Endothelial cell of umbilical vein (primary cell): ENCODE measurements at regions of chr2 and their contacts with region 1.

Region 1: DNA sequence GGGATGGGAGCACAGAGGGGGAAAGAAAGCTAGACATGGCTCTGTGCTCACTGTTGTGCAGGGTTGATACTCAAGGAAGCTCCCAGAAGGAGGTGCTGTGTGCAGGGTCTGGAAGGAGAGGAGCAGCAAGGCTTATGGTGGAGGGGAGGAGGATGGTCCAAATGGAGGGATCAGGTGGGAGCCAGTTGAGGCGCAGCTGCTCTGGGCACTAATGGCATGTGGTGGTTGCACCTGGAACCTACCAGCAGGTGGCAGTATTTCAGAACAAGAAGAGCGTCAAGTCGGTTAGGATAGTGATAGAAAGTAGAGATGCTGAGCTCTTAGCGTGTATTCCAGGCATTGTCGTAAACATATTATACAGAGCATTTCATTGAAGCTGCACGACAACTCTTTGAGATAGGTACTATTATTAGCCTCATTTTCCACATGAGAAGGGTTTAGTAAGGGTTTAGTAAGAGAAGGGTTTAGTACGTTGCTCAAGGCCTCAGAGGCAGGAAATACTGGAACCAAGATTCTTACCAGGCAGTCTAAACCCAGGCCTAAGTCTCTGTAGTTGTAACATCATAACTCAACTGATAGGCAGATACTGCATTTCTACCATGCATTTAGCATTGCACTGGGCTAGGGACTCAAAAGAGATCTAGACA is 223.7 kb downstream of the CYP26B1 start:
- DNase-seq: peak; percentile 66
- H3K4me3 ChIP-seq: no peak overlapping the region
- H3K27ac ChIP-seq: no peak overlapping the region
- H3K4me1 ChIP-seq: no peaks in the 10 kb centered on the region
- H3K27me3 ChIP-seq: no peaks in the 10 kb centered on the region
- CTCF ChIP-seq: peak; percentile 78 to 81
- POLR2A ChIP-seq: no peak

Region 2: GRCh38 chr2:71545572-71546274 is 378.3 kb before region 1 on chr2:
- CTCF ChIA-PET with region 1: interaction called, 4 read pairs
- POLR2A ChIA-PET with region 1: no interaction called
- dilution Hi-C with region 1: no loop called
- intact Hi-C with region 1: loop called (anchors 1 kb)
- DNase-seq: peak; percentile 74
- H3K4me3 ChIP-seq: peak overlapping the region in 1 of 3 experiments; percentile 7
- H3K27ac ChIP-seq: no peak overlapping the region
- H3K4me1 ChIP-seq: peaks cover 11% of the 10 kb centered on the region
- H3K27me3 ChIP-seq: no peaks in the 10 kb centered on the region
- CTCF ChIP-seq: peak; percentile 64 to 72
- POLR2A ChIP-seq: no peak

Region 3: DNA sequence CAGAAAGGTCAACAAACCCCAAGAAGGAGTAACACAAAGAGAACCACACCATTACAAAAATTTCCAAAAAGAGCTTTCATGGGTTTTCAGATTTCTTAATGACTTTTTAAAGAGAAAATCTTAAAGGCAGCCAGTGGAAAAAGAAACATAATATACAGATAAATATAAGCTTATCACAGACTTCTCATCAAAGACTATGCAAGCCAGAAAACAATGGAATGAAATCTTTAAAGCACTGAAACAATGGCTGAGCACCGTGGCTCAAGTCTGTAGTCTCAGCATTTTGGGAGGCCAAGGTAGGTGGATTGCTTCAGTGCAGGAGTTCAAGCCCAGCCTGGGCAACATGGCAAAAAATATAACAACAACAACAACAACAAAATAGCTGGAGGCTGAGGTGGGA is 13.7 kb before region 1 on chr2:
- CTCF ChIA-PET with region 1: interaction called, 15 read pairs
- POLR2A ChIA-PET with region 1: no interaction called
- dilution Hi-C with region 1: no loop called
- intact Hi-C with region 1: no loop called
- DNase-seq: no peak
- H3K4me3 ChIP-seq: no peak overlapping the region
- H3K27ac ChIP-seq: no peak overlapping the region
- H3K4me1 ChIP-seq: no peaks in the 10 kb centered on the region
- H3K27me3 ChIP-seq: peaks cover 4 to 15% of the 10 kb centered on the region in 2 experiments
- CTCF ChIP-seq: no peak
- POLR2A ChIP-seq: no peak

Region 4: GRCh38 chr2:71950256-71951082 is 26.5 kb after region 1 on chr2:
- CTCF ChIA-PET with region 1: interaction called, 12 read pairs
- POLR2A ChIA-PET with region 1: no interaction called
- dilution Hi-C with region 1: no loop called
- intact Hi-C with region 1: no loop called
- DNase-seq: no peak
- H3K4me3 ChIP-seq: no peak overlapping the region
- H3K27ac ChIP-seq: no peak overlapping the region
- H3K4me1 ChIP-seq: no peaks in the 10 kb centered on the region
- H3K27me3 ChIP-seq: no peaks in the 10 kb centered on the region
- CTCF ChIP-seq: no peak
- POLR2A ChIP-seq: no peak

Region 5: GRCh38 chr2:72150157-72150865 is 226.3 kb after region 1 on chr2:
- CTCF ChIA-PET with region 1: interaction called, 174 read pairs
- POLR2A ChIA-PET with region 1: no interaction called
- dilution Hi-C with region 1: no loop called
- intact Hi-C with region 1: loop called (anchors 1 kb)
- DNase-seq: peak; percentile 77
- H3K4me3 ChIP-seq: no peak overlapping the region
- H3K27ac ChIP-seq: no peak overlapping the region
- H3K4me1 ChIP-seq: peaks cover 15% of the 10 kb centered on the region
- H3K27me3 ChIP-seq: peaks cover 33 to 48% of the 10 kb centered on the region in 2 experiments
- CTCF ChIP-seq: peak; percentile 66 to 85
- POLR2A ChIP-seq: no peak

Region 6: GRCh38 chr2:72579591-72580180 is 655.7 kb after region 1 on chr2:
- CTCF ChIA-PET with region 1: interaction called, 158 read pairs
- POLR2A ChIA-PET with region 1: no interaction called
- dilution Hi-C with region 1: no loop called
- intact Hi-C with region 1: loop called (anchors 1 kb)
- DNase-seq: peak; percentile 69
- H3K4me3 ChIP-seq: no peak overlapping the region
- H3K27ac ChIP-seq: no peak overlapping the region
- H3K4me1 ChIP-seq: no peaks in the 10 kb centered on the region
- H3K27me3 ChIP-seq: no peaks in the 10 kb centered on the region
- CTCF ChIP-seq: peak; percentile 36 to 44
- POLR2A ChIP-seq: no peak

Region 7: GRCh38 chr2:72745679-72746368 is 821.8 kb after region 1 on chr2:
- CTCF ChIA-PET with region 1: interaction called, 49 read pairs
- POLR2A ChIA-PET with region 1: no interaction called
- dilution Hi-C with region 1: no loop called
- intact Hi-C with region 1: loop called (anchors 1 kb)
- DNase-seq: peak; percentile 88
- H3K4me3 ChIP-seq: no peak overlapping the region
- H3K27ac ChIP-seq: no peak overlapping the region
- H3K4me1 ChIP-seq: no peaks in the 10 kb centered on the region
- H3K27me3 ChIP-seq: no peaks in the 10 kb centered on the region
- CTCF ChIP-seq: peak; percentile 37 to 50
- POLR2A ChIP-seq: no peak